ENCODE measurements at regions of chr22 and their contacts with region 1.

Region 1: GRCh38 chr22:49936018-49936952 is 17.9 kb downstream of the CRELD2 start:
- DNase-seq: peak; percentile 98
- ATAC-seq: peak; percentile 73
- H3K4me3 ChIP-seq: peak overlapping the region in 4 of 5 experiments; percentile 41 to 56 (median 50)
- H3K4me3 Mint-ChIP-seq: peak overlapping the region; percentile 66
- H3K27ac ChIP-seq: peak overlapping the region; percentile 91 to 92
- H3K27ac Mint-ChIP-seq: peak overlapping the region; percentile 82
- H3K4me1 ChIP-seq: peaks cover 41 to 53% of the 10 kb centered on the region in 2 donors
- H3K4me1 Mint-ChIP-seq: peaks cover 27% of the 10 kb centered on the region
- H3K27me3 ChIP-seq: no peaks in the 10 kb centered on the region
- H3K27me3 Mint-ChIP-seq: no peaks in the 10 kb centered on the region
- CTCF ChIP-seq: no peak

Region 2: GRCh38 chr22:49838771-49839717 is 97.2 kb before region 1 on chr22:
- CTCF ChIA-PET with region 1: no interaction called
- POLR2A ChIA-PET with region 1: no interaction called
- intact Hi-C with region 1: no loop called
- DNase-seq: peak; percentile 65
- ATAC-seq: peak; percentile 97
- H3K4me3 ChIP-seq: peak overlapping the region in 4 of 5 experiments; percentile 41 to 52 (median 48)
- H3K4me3 Mint-ChIP-seq: peak overlapping the region; percentile 74
- H3K27ac ChIP-seq: peak overlapping the region; percentile 43 to 51
- H3K27ac Mint-ChIP-seq: peak overlapping the region; percentile 61
- H3K4me1 ChIP-seq: peaks cover 3 to 9% of the 10 kb centered on the region in 2 donors
- H3K4me1 Mint-ChIP-seq: peaks cover 11% of the 10 kb centered on the region
- H3K27me3 ChIP-seq: peaks cover 0 to 4% (median 0%) of the 10 kb centered on the region in 4 experiments
- H3K27me3 Mint-ChIP-seq: peaks cover 4% of the 10 kb centered on the region
- CTCF ChIP-seq: no peak

Region 3: DNA sequence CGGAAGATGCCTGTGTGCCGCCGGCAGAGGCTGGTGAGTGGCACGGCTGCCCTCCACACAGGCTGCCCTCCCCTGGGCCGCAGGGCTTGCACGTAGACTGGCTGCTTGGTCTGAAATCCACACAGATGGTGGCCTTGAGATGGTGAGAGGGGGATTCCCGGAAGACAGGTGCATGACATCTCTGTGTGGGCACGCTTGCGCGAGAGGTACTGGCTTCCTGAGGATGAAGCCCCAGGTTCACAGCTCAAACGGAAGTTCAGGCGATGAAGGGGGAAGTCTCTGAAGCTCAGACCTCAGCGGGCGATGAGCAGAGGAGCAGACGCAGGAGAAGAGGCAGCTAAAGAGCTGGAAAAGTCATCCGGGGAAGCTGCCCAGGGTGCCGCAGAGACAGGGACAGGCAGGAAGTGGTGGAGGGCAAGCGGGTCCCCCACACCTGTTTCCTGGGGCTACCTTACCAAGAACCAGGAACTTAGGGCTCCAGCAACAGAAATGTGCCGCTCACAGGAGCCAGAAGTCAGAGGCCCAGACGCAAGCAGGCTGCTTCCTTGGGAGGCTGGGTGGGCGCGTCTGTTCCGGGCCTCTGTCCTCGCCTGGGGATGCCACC is 10.7 kb before region 1 on chr22:
- CTCF ChIA-PET with region 1: interaction called, 6 read pairs
- POLR2A ChIA-PET with region 1: interaction called, 28 read pairs
- intact Hi-C with region 1: no loop called
- DNase-seq: peak; percentile 96
- ATAC-seq: peak; percentile 74
- H3K4me3 ChIP-seq: peak overlapping the region in 4 of 5 experiments; percentile 37 to 53 (median 44)
- H3K4me3 Mint-ChIP-seq: peak overlapping the region; percentile 87
- H3K27ac ChIP-seq: peak overlapping the region; percentile 95 to 98
- H3K27ac Mint-ChIP-seq: peak overlapping the region; percentile 98
- H3K4me1 ChIP-seq: peaks cover 48 to 57% of the 10 kb centered on the region in 2 donors
- H3K4me1 Mint-ChIP-seq: peaks cover 55% of the 10 kb centered on the region
- H3K27me3 ChIP-seq: no peaks in the 10 kb centered on the region
- H3K27me3 Mint-ChIP-seq: no peaks in the 10 kb centered on the region
- CTCF ChIP-seq: no peak

Region 4: DNA sequence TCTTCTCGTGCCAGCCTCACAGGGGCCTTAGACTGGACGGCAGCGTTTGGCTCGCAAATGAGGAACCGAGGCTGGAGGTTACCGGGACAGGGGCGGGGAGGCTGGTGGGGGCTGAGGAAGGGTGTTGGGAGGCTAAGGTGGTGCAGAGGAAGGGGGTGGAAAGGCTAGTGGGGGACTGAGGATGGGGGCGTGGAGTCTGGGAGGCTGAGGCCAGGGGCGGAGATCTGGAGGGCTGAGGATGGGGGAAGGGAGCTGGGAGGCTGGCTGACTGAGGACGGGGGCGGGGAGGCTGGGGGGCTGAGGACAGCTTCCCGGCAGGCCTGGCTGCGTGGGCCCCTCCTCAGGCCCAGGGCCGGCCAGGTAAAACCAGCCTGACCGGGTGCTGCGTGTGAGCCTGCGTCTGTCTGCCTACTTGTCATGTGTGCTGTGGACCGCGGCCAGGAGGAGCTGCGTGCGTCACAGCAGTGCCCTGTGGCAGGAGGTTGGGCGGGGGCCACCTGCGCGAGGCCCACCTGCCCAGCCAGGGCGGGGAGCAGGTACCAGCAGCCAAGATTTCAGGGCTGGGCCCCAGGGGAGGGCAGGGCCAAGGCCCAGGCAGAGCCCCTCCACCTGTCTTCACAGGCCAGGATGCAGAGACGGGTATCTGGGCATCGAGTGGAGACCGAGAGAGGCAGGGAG is 14.9 kb after region 1 on chr22:
- CTCF ChIA-PET with region 1: interaction called, 5 read pairs
- POLR2A ChIA-PET with region 1: interaction called, 22 read pairs
- intact Hi-C with region 1: loop called (anchors 2 kb)
- DNase-seq: peak; percentile 73
- ATAC-seq: peak; percentile 67
- H3K4me3 ChIP-seq: no peak overlapping the region
- H3K4me3 Mint-ChIP-seq: no peak overlapping the region
- H3K27ac ChIP-seq: no peak overlapping the region
- H3K27ac Mint-ChIP-seq: no peak overlapping the region
- H3K4me1 ChIP-seq: peaks cover 1 to 18% of the 10 kb centered on the region in 2 donors
- H3K4me1 Mint-ChIP-seq: peaks cover 2% of the 10 kb centered on the region
- H3K27me3 ChIP-seq: no peaks in the 10 kb centered on the region
- H3K27me3 Mint-ChIP-seq: no peaks in the 10 kb centered on the region
- CTCF ChIP-seq: no peak

Region 5: DNA sequence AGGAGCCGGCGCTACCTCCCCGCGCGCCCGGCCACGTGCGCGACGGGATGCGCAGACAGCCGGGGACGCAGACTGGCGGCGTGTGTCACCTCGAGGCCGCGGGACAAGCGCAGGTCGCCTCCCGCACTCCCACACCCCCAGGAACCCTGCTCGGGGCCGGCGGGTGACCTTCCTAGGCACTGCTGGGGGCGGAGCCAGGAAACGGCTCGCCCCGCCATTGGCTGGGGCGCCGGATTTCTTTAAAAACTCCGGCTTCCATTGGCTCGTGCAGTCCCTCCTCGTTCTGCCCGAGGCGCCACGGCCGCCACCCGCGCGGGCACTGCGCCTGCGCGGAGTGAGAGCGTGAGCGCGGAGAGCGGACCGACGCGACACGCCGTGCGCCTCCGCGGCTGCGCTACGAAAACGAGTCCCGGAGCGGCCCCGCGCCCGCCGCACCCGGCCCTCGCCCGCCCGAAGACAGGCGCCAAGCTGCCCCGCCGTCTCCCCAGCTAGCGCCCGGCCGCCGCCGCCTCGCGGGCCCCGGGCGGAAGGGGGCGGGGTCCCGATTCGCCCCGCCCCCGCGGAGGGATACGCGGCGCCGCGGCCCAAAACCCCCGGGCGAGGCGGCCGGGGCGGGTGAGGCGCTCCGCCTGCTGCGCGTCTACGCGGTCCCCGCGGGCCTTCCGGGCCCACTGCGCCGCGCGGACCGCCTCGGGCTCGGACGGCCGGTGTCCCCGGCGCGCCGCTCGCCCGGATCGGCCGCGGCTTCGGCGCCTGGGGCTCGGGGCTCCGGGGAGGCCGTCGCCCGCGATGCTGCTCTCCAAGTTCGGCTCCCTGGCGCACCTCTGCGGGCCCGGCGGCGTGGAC is 24.1 kb after region 1 on chr22 and contains the start of gene PIM3:
- CTCF ChIA-PET with region 1: interaction called, 60 read pairs
- POLR2A ChIA-PET with region 1: interaction called, 94 read pairs
- intact Hi-C with region 1: loop called (anchors 1 kb)
- DNase-seq: peak; percentile 98
- ATAC-seq: peak; percentile 78
- H3K4me3 ChIP-seq: peak within 1 kb of the TSS; percentile 65 to 88 (median 77)
- H3K4me3 Mint-ChIP-seq: peak within 1 kb of the TSS; percentile 91
- H3K27ac ChIP-seq: peak within 1 kb of the TSS; percentile 85 to 94
- H3K27ac Mint-ChIP-seq: peak within 1 kb of the TSS; percentile 91
- H3K4me1 ChIP-seq: peaks cover 22 to 36% of the 10 kb centered on the region in 2 donors
- H3K4me1 Mint-ChIP-seq: peaks cover 38% of the 10 kb centered on the region
- H3K27me3 ChIP-seq: no peaks in the 10 kb centered on the region
- H3K27me3 Mint-ChIP-seq: no peaks in the 10 kb centered on the region
- CTCF ChIP-seq: no peak
- total RNA-seq, gene PIM3: 127 and 128 TPM in 2 replicates

Region 6: DNA sequence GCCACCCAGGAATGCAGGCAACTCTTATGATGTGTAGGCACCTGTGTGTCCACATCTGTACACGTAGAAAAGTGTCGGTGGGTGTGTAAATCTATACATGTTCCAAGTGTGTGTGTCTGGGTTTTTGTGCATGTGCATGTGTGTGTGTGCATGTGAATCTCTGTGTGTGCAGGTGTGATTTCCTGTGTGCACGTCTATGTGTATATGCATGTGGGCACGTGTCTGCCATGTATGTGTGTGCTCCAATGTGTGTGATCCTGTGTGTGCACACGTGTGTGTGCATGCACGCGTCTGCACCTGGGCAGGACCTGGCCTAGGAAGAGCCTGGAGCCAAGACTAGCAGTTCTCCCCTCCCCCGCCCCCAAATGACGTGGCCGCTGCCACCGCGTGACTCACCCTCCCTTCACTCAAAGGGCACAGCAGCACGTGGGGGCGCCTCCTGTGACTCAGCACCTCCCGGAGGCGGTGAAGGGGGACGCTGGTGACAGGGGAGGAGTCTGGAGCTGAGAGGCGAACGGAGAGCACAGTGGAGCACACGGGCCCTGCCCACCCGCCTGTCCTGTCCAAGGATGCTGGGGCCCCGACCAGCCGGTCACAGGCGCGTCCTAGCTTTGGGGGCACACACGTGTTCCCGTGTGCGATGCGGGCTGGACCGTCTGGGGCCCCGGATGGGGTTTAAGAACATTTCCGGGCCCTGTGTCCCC is 34.4 kb after region 1 on chr22:
- CTCF ChIA-PET with region 1: interaction called, 37 read pairs
- POLR2A ChIA-PET with region 1: interaction called, 27 read pairs
- intact Hi-C with region 1: loop called (anchors 2 kb)
- DNase-seq: peak; percentile 95
- ATAC-seq: peak; percentile 85
- H3K4me3 ChIP-seq: peak overlapping the region in 4 of 5 experiments; percentile 41 to 65 (median 55)
- H3K4me3 Mint-ChIP-seq: peak overlapping the region; percentile 84
- H3K27ac ChIP-seq: peak overlapping the region in 1 of 2 donors; percentile 40
- H3K27ac Mint-ChIP-seq: peak overlapping the region; percentile 96
- H3K4me1 ChIP-seq: peaks cover 43 to 56% of the 10 kb centered on the region in 2 donors
- H3K4me1 Mint-ChIP-seq: peaks cover 40% of the 10 kb centered on the region
- H3K27me3 ChIP-seq: no peaks in the 10 kb centered on the region
- H3K27me3 Mint-ChIP-seq: no peaks in the 10 kb centered on the region
- CTCF ChIP-seq: no peak

Region 7: GRCh38 chr22:50474668-50475492 is 538.6 kb after region 1 on chr22 and contains the start of gene SBF1:
- CTCF ChIA-PET with region 1: no interaction called
- POLR2A ChIA-PET with region 1: no interaction called
- intact Hi-C with region 1: loop called (anchors 10 kb)
- DNase-seq: peak; percentile 93
- ATAC-seq: peak; percentile 78
- H3K4me3 ChIP-seq: peak within 1 kb of the TSS; percentile 51 to 81 (median 68)
- H3K4me3 Mint-ChIP-seq: peak within 1 kb of the TSS; percentile 89
- H3K27ac ChIP-seq: peak within 1 kb of the TSS; percentile 20 to 90
- H3K27ac Mint-ChIP-seq: peak within 1 kb of the TSS; percentile 92
- H3K4me1 ChIP-seq: peaks cover 46 to 51% of the 10 kb centered on the region in 2 donors
- H3K4me1 Mint-ChIP-seq: peaks cover 48% of the 10 kb centered on the region
- H3K27me3 ChIP-seq: no peaks in the 10 kb centered on the region
- H3K27me3 Mint-ChIP-seq: peaks cover 2% of the 10 kb centered on the region
- CTCF ChIP-seq: no peak
- total RNA-seq, gene SBF1: 254 TPM in 2 replicates